ENCODE measurements at regions of chr11 and their contacts with region 1.

Region 1: DNA sequence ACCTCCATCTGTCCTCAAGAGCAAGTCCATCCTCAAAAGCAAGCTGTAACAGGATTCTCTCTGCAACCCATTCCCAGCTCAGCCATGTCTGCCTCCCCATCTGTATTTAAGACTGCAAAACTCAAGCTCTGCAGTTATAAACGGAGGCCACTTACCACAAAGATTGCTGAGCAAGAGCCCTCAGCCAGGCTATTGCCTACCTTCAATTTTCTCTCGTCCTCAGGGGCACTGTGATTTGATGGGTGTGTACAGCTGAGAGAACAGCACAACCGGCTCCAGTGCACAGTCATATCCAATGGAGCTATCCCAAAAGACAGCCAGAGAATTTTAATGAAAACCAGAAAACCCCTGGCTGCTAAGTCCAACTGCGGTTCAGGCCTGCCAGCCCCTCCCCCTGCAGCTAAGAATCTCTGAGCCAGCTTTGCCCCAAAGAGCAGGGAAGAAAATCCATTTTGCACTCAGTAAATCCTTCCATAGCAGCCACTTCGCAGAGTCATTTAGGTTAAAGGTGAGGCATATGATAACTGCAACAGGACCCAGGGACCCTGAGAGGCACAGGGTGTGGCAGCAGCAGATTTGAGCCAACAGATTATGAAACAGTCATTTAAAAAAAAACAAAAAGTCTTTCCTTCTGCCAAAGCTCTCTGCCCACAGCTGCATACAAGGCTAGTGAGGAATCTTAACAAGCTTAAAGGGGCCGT is 37.6 kb downstream of the RAB30 start:
- DNase-seq: peak; percentile 71 to 86
- ATAC-seq: peak; percentile 72 to 77
- H3K4me3 ChIP-seq: peak overlapping the region; percentile 23 to 54 (median 48)
- H3K27ac ChIP-seq: peak overlapping the region; percentile 89 to 94 (median 92)
- H3K4me1 ChIP-seq: peaks cover 75 to 81% of the 10 kb centered on the region in 2 donors
- H3K27me3 ChIP-seq: no peaks in the 10 kb centered on the region
- CTCF ChIP-seq: no peak
- POLR2A ChIP-seq: peak; percentile 41 to 45

Region 2: DNA sequence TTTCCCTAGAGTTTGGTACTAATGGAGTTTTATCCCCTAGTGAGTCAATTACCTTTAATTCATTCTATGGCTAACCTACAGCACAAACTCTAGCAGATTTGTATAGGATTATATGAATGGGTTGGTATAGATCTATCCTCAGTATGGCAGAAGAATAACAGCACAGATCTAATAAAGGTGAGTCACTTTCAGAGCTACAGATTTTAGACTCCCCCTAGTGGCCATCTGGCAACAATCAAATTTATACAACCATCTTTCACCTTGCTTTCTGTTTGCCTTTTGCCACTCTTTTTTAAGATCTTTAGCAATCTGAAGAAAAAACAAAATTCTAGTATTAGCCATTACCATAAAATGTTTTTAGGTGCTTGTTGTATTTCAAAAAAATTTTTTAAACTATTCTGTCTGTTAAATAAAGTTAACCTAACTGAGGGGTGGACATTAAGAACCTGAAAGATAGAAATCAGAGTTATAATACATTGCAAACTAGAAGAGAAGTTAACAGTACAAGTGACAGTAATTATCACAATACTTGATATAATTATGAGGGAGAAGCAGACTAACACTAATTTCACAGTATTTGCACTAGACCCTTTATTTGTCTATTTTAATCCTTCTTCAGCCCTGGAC is 106.8 kb before region 1 on chr11:
- in situ Hi-C with region 1: no loop called
- intact Hi-C with region 1: no loop called
- DNase-seq: no peak
- ATAC-seq: peak in 1 of 2 donors; percentile 80
- H3K4me3 ChIP-seq: no peak overlapping the region
- H3K27ac ChIP-seq: no peak overlapping the region
- H3K4me1 ChIP-seq: no peaks in the 10 kb centered on the region
- H3K27me3 ChIP-seq: no peaks in the 10 kb centered on the region
- CTCF ChIP-seq: peak; percentile 56 to 81 (median 58)
- POLR2A ChIP-seq: no peak

Region 3: GRCh38 chr11:83051760-83052671 is 17.9 kb after region 1 on chr11:
- in situ Hi-C with region 1: no loop called
- intact Hi-C with region 1: loop called (anchors 2 kb)
- DNase-seq: peak; percentile 28 to 64
- ATAC-seq: peak; percentile 84 to 86
- H3K4me3 ChIP-seq: no peak overlapping the region
- H3K27ac ChIP-seq: peak overlapping the region; percentile 82 to 93 (median 88)
- H3K4me1 ChIP-seq: peaks cover 67 to 71% of the 10 kb centered on the region in 2 donors
- H3K27me3 ChIP-seq: no peaks in the 10 kb centered on the region
- CTCF ChIP-seq: no peak
- POLR2A ChIP-seq: no peak